ENCODE measurements at regions of chr4 and their contacts with region 1.

Region 1: DNA sequence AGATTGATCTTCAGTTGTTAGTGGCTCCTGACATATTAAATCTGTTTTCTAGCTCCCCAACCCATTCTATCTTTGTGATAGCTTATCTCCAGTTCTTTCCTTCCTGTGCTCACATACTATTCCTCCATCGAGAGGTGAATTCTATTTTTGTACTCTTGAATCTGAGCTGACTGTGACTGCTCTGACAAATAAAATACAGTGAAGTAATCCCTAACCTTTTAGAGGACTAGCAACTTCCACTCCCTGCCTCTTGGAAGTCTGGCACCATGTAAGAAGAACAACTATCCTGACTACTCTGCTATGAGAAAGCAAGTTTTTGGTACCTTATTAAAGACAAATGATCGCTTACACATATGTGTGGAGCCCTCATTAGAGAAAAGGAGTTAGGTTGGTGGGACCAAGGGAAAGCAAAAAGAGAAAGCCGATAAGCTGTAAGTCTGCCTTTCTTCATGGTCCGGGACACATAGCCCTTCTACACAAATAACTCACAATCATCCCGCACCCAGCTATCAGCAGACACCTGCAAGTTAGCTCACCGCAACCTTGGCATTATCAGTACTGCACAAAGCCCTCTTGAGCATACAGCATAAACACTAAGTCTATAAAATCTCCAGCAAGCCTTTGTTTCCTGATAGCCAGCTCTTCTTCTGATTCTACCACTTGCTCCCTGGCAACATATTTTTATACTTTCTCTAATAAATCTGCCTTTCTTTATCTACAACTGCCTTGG is 13.5 kb upstream of the PPM1K start:
- DNase-seq: no peak
- ATAC-seq: peak; percentile 62 to 92 (median 80)
- H3K4me3 ChIP-seq: peak overlapping the region in 1 of 10 donors; percentile 13
- H3K27ac ChIP-seq: peak overlapping the region; percentile 62 to 98 (median 82)
- H3K4me1 ChIP-seq: peaks cover 0 to 37% (median 2%) of the 10 kb centered on the region in 9 donors
- H3K27me3 ChIP-seq: no peaks in the 10 kb centered on the region
- CTCF ChIP-seq: no peak

Region 2: DNA sequence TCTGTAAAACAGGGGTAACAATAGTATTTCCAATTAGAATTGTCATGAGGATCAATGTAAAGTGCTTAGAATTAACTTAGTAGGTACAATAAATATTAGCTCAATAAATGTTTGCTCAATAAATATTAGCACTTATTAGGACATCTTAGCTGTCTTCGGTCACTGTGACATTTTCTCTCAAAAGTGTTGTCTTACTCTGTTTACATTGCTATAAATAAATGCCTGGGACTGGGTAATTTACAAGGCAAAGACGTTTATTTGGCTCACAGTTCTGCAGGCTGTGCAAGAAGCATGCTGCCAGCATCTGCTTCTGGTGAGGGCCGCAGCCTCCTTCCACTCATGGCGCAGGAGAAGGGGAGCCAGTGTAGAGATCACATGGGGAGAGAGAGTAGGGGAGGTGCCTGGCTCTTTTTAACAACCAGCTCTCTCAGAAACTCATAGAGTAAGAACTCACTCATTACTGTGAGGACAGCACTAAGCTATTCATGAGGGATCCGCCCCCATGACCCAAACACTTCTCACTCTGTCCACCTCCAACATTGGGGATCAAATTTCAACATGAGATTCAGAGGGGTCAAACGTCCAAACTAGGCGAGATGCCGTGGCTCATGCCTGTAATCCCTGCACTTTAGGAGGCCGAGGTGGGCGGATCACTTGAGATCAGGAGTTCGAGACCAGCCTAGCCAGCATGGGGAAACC is 37.2 kb after region 1 on chr4:
- intact Hi-C with region 1: loop called in 3 of 10 experiments (anchors 5 kb)
- DNase-seq: peak in 1 of 2 donors; percentile 14
- ATAC-seq: peak in 5 of 8 donors; percentile 35 to 83 (median 52)
- H3K4me3 ChIP-seq: no peak overlapping the region
- H3K27ac ChIP-seq: no peak overlapping the region
- H3K4me1 ChIP-seq: peaks cover 0 to 3% (median 1%) of the 10 kb centered on the region in 9 donors
- H3K27me3 ChIP-seq: no peaks in the 10 kb centered on the region
- CTCF ChIP-seq: no peak

Region 3: DNA sequence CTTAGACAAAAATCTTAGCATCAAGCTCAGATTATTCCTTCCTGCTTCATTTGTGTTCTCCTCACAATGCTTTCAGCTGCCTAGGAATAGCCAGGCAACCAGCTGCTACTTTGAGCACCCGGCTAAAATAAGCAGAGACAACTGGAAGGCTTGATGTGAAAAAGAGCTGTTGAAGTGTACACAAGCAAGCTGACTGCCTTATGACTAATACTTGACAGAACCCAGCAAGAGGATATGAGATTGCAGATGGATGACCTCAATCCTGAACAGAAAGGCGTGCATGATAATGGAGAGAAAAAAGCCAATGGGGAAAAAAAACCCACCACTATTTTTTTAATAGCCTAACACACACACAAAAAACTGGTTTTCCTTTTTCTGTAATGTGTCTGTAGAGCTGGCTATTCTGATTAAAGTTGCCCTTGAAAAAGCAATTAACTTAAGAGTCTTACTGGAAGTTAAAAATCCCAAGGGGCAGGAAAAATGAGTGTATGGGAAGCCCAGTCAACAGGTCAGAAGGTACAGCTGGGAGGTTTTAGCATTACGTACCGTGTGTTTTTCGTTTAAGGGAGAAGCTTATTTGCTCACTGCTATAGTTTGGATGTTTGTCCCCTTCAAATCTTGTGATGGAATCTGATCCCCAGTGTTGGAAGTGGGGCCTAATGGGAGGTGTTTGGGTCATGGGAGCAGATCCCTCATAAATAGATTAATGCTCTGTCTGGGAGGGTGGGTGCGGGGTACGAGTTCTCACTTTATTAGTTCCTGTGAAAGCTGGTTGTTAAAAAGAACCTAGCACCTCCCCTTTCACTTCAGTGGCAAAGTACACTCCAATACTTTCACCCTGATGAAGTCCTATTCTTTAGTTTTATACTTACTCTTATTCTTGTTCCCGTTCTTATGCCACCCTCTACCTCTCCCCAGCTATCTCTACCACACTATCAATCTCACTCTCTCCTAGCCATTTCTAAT is 43.6 kb after region 1 on chr4:
- intact Hi-C with region 1: loop called in 3 of 10 experiments (anchors 5 kb)
- DNase-seq: peak in 1 of 2 donors; percentile 61
- ATAC-seq: peak; percentile 95 to 99 (median 98)
- H3K4me3 ChIP-seq: no peak overlapping the region
- H3K27ac ChIP-seq: peak overlapping the region; percentile 71 to 92 (median 84)
- H3K4me1 ChIP-seq: peaks cover 0 to 29% (median 18%) of the 10 kb centered on the region in 9 donors
- H3K27me3 ChIP-seq: no peaks in the 10 kb centered on the region
- CTCF ChIP-seq: no peak

Measured in heart right ventricle (tissue), 16 donors.